ENCODE measurements at regions of chr9 and their contacts with region 1.

Region 1: GRCh38 chr9:70581214-70581954 is 166.9 kb upstream of the KLF9 start:
- DNase-seq: no peak
- ATAC-seq: no peak
- H3K4me3 ChIP-seq: no peak overlapping the region
- H3K27ac ChIP-seq: no peak overlapping the region
- H3K4me1 ChIP-seq: peaks cover 0 to 36% (median 29%) of the 10 kb centered on the region in 9 donors
- H3K27me3 ChIP-seq: no peaks in the 10 kb centered on the region
- CTCF ChIP-seq: no peak

Region 2: DNA sequence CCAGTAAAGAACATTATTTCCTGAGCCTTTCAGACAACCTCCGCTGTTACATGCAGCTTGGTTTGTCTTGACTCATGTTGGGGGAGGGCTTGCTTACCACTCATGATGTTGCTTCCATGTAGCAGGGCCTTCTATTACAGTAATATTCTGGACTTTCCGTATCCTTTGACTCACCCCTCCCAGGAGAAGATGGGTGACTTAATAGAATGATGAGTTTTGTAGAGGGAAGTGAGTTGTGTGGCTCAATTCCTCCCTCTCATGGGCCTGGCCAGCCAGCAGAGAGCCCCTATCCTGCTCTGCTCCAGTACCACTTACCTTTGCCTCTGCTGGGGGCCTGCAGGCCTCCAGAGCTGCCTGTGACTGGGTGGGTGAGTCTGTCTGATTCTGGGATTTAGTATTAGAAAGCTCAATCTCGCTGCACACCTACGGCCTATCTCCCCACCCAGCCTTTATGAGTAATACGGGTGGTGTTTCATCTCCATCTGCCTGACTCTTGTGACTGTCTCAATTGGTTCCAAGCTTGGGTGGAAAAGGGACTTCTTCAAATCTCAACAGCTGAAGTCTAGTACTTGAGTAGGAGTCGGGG is 114.3 kb before region 1 on chr9:
- intact Hi-C with region 1: no loop called
- DNase-seq: no peak
- ATAC-seq: peak in 2 of 8 donors; percentile 1 to 53
- H3K4me3 ChIP-seq: no peak overlapping the region
- H3K27ac ChIP-seq: peak overlapping the region in 3 of 10 donors; percentile 45 to 75 (median 65)
- H3K4me1 ChIP-seq: peaks cover 14 to 57% (median 36%) of the 10 kb centered on the region in 9 donors
- H3K27me3 ChIP-seq: no peaks in the 10 kb centered on the region
- CTCF ChIP-seq: peak in 1 of 9 donors; percentile 14

Region 3: DNA sequence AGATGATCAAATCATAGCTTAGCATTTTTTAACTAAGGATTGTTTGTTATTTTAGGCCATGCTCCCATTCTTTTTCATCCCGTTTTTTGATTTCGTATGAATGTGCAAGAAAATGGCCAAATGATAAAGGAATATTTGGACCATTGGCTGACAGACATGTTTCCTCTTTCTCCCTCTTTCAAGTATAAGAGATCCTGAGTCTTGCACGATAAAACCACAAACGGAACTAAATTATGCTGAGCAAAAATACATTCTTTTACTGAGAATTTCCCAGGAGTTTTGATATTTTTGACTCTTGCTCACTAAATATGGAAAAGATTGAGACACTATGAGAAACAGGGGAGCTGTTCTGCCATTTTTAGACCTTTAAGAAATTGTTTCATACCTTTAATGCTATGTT is 76.5 kb before region 1 on chr9:
- intact Hi-C with region 1: loop called in 2 of 10 experiments (anchors 5 to 10 kb)
- DNase-seq: no peak
- ATAC-seq: peak in 3 of 8 donors; percentile 7 to 54 (median 30)
- H3K4me3 ChIP-seq: no peak overlapping the region
- H3K27ac ChIP-seq: peak overlapping the region in 6 of 10 donors; percentile 14 to 49 (median 42)
- H3K4me1 ChIP-seq: peaks cover 0 to 38% (median 12%) of the 10 kb centered on the region in 9 donors
- H3K27me3 ChIP-seq: no peaks in the 10 kb centered on the region
- CTCF ChIP-seq: no peak

Region 4: DNA sequence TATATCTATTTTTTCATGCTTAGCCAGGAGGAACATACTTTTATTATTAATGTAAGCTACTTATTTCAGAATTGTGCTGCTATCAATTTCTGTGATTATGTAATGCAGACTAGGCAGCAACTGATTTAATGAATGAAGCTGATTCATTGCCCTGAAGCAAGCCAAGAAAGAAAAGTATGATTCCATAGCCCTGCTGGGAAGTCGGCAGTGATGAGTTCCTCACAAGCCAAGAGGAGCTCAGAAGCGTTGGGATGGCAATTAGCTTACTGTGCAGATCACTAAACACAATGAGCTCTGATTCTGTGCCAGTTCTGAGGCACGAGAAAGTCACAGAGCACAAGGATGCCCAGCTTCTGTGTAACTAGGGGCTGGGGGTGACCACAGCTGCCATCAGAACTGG is 87.4 kb after region 1 on chr9:
- intact Hi-C with region 1: no loop called
- DNase-seq: no peak
- ATAC-seq: peak in 2 of 8 donors; percentile 38 to 63
- H3K4me3 ChIP-seq: no peak overlapping the region
- H3K27ac ChIP-seq: no peak overlapping the region
- H3K4me1 ChIP-seq: no peaks in the 10 kb centered on the region
- H3K27me3 ChIP-seq: no peaks in the 10 kb centered on the region
- CTCF ChIP-seq: no peak

Measured in heart right ventricle (tissue), 16 donors.